Colonic mucosa (tissue), 4 donors: ENCODE measurements at regions of chr16 and their contacts with region 1.

Region 1: DNA sequence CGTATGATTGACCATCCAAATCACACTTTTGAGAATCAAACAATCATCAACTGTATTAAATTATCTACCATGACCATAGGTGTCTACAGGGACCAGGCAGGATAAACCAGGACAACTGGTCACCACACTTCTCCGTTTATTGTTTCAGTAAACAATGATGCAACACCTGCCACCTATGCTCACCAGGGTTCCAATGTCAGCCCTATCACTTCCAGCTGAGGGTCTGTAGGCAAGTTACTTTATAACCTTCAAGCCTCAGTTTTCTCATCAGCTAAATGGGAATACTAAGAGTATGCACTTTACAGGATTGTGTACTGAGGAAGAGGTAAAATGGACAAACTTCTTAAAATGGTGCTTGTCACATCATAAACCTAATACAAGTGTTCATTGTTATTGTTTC is 14.9 kb downstream of the TMEM114 start:
- DNase-seq: no peak
- H3K4me3 ChIP-seq: no peak overlapping the region
- H3K27ac ChIP-seq: no peak overlapping the region
- H3K4me1 ChIP-seq: no peaks in the 10 kb centered on the region
- H3K27me3 ChIP-seq: no peaks in the 10 kb centered on the region
- CTCF ChIP-seq: no peak

Region 2: GRCh38 chr16:8634991-8635736 is 59.8 kb after region 1 on chr16:
- intact Hi-C with region 1: loop called (anchors 5 kb)
- DNase-seq: no peak
- H3K4me3 ChIP-seq: no peak overlapping the region
- H3K27ac ChIP-seq: no peak overlapping the region
- H3K4me1 ChIP-seq: no peaks in the 10 kb centered on the region
- H3K27me3 ChIP-seq: no peaks in the 10 kb centered on the region
- CTCF ChIP-seq: peak; percentile 37

Region 3: DNA sequence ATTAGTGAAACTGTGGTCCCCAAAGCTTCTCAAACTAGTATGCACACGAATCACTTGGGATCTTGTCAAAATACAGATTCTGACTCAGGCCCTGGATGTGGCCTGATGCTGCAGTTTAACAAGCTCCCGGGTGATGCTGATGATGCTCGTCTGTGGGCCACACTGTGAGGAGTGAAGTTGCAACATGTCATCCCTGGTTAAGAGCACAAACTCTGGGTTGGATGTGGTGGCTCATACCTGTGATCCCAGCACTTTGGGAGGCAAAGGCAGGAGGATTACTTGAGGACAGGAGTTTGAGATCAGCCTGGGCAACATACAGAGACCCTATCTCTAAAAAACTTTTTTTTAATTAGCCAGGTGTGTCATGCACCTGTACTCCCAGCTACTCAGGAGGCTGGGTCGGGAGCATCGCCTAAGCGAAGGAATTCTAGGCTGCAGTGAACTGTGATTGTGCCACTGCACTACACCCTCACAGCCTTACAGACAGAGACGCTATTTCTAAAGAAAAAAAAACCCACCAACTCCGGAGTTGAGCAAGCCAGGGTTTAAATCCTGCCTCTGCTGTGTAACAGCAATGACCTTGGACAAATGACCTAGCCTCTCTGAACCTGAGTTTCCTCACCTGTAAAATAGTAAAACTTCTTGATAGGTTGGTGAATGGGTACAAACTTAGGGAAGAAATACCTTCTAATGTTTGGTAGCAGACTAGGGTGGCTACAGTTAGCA is 74.6 kb after region 1 on chr16:
- intact Hi-C with region 1: loop called (anchors 5 kb)
- DNase-seq: no peak
- H3K4me3 ChIP-seq: no peak overlapping the region
- H3K27ac ChIP-seq: no peak overlapping the region
- H3K4me1 ChIP-seq: no peaks in the 10 kb centered on the region
- H3K27me3 ChIP-seq: no peaks in the 10 kb centered on the region
- CTCF ChIP-seq: no peak

Region 4: GRCh38 chr16:8729779-8730334 is 154.5 kb after region 1 on chr16:
- intact Hi-C with region 1: no loop called
- DNase-seq: no peak
- H3K4me3 ChIP-seq: no peak overlapping the region
- H3K27ac ChIP-seq: no peak overlapping the region
- H3K4me1 ChIP-seq: no peaks in the 10 kb centered on the region
- H3K27me3 ChIP-seq: no peaks in the 10 kb centered on the region
- CTCF ChIP-seq: no peak